ENCODE measurements at regions of chr3 and their contacts with region 1.

Region 1: GRCh38 chr3:15542614-15543013 is 21.1 kb upstream of the COLQ start:
- DNase-seq: no peak

Region 2: DNA sequence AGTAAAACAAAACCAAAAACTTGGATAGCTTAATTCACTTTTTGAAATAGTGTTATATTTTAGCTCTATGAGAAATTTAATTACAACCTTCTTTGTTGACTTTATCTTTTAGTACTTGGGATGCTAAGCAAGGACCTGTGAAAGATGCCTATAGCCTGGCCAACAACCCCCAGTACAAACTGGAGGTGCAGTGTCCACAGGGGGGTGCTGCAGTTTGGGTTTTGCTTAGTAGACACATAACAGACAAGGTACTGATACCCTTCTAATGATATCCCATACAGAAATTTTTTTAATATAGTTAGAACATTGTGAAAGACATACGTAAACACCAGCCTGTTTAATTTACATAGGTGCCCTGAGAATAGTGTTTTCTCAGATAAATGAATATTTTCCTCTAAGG is 301.3 kb before region 1 on chr3:
- CTCF ChIA-PET with region 1: interaction called, 11 read pairs
- POLR2A ChIA-PET with region 1: no interaction called
- DNase-seq: no peak

Measured in HEK293T (cell line).